Activated CD4-positive, alpha-beta T cell treated with anti-CD3 and anti-CD28 coated beads for 36 hours (primary cell): ENCODE measurements at regions of chr17 and their contacts with region 1.

Region 1: DNA sequence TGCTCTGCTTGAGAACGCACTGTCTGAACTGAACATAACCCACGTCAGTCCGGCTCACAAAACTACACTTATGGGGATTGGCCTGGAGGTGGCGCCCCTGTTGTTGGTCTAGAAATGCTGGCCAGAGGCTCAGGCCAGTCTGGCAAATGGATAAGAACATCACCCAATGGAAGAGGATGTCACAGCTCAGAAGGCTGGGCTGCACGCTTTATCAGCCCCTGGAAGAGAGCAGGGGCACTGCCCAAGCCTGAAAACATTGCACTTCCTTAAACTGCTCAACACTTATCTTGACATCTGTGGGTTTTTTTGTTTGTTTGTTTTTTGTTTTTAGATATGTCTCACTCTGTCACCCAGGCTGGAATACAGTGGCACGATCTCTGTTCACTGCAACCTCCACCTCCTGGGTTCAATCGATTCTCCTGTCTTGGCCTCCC is 24.8 kb upstream of the BPTF start:
- DNase-seq: peak; percentile 77
- ATAC-seq: peak; percentile 77
- H3K4me3 Mint-ChIP-seq: no peak overlapping the region
- H3K27ac Mint-ChIP-seq: no peak overlapping the region
- H3K4me1 Mint-ChIP-seq: no peaks in the 10 kb centered on the region
- H3K27me3 Mint-ChIP-seq: no peaks in the 10 kb centered on the region

Region 2: GRCh38 chr17:67733371-67733940 is 67.1 kb before region 1 on chr17:
- CTCF ChIA-PET with region 1: no interaction called
- POLR2A ChIA-PET with region 1: interaction called, 13 read pairs
- intact Hi-C with region 1: no loop called
- DNase-seq: no peak
- ATAC-seq: no peak
- H3K4me3 Mint-ChIP-seq: no peak overlapping the region
- H3K27ac Mint-ChIP-seq: peak overlapping the region; percentile 40
- H3K4me1 Mint-ChIP-seq: peaks cover 19% of the 10 kb centered on the region
- H3K27me3 Mint-ChIP-seq: no peaks in the 10 kb centered on the region

Region 3: DNA sequence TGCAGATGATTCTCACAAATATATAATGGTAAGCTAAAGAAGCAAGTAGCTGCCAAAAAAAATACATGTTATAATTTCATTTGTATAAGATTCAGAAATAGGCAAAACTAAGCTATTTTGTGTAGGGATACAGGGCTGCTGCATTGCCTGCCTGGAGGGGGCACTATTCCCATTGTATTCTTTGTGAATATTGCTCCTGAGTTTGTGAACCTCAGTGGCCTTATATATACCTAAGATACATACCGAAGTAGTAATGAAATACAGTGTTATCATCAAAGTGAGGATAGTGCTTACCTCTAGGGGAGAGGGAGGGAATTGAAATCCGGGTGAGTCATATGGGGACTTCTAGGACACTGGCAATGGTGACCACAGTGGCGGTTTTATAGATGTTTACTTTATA is 142.3 kb after region 1 on chr17:
- CTCF ChIA-PET with region 1: no interaction called
- POLR2A ChIA-PET with region 1: no interaction called
- intact Hi-C with region 1: loop called in 1 of 2 experiments (anchors 5 kb)
- DNase-seq: peak; percentile 23
- ATAC-seq: peak; percentile 36
- H3K4me3 Mint-ChIP-seq: no peak overlapping the region
- H3K27ac Mint-ChIP-seq: no peak overlapping the region
- H3K4me1 Mint-ChIP-seq: no peaks in the 10 kb centered on the region
- H3K27me3 Mint-ChIP-seq: no peaks in the 10 kb centered on the region

Region 4: DNA sequence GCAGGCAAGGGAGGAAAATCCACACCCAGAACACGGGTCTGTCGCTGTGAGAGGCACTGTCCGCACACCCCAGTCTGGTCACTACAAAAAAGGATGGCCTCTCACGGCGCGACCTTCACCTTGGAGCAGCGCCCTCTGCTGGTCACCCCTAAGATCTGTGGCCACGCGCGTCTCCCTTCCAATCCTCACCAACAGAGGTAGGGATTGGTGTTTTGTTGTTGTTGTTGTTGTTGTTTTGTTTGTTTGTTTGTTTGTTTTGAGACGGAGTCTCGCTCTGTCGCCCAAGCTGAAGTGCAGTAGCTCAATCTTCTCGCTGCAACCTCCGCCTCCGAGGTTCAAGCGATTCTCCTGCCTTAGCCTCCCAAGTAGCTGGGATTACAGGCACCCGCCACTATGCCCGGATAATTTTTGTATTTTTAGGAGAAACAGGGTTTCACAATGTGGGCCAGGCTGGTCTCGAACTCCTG is 210.7 kb after region 1 on chr17:
- CTCF ChIA-PET with region 1: no interaction called
- POLR2A ChIA-PET with region 1: no interaction called
- intact Hi-C with region 1: loop called (anchors 1 to 2 kb)
- DNase-seq: peak; percentile 86
- ATAC-seq: peak; percentile 90
- H3K4me3 Mint-ChIP-seq: peak overlapping the region; percentile 64
- H3K27ac Mint-ChIP-seq: peak overlapping the region; percentile 67
- H3K4me1 Mint-ChIP-seq: peaks cover 5% of the 10 kb centered on the region
- H3K27me3 Mint-ChIP-seq: no peaks in the 10 kb centered on the region